Panc1 (cell line): ENCODE measurements at regions of chr4 and their contacts with region 1.

Region 1: DNA sequence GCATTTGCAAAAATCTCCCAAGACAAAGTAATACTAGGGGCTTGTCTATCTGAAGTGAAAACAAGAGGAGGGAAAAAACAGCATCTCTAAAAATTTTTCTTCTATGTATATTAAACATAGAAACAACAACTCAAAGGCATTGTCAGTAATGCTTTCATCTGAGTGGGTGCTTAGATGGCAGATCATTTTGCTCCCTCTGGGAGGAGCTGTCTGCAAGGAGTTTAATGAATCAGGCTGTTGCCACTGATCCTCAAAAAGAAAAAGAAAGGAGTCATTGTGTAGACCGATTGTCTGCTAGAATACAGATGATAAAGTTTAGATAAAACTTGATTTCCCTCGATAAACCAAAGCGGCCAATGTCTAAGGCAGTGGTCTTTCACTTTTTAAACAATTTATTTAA is 49.7 kb upstream of the KLHL8 start:
- DNase-seq: no peak
- ATAC-seq: peak; percentile 78
- H3K4me3 ChIP-seq: no peak overlapping the region
- H3K27ac ChIP-seq: no peak overlapping the region
- H3K4me1 ChIP-seq: no peaks in the 10 kb centered on the region
- H3K27me3 ChIP-seq: no peaks in the 10 kb centered on the region
- CTCF ChIP-seq: peak; percentile 62; the same call in 1 of the 2 replicates

Region 2: DNA sequence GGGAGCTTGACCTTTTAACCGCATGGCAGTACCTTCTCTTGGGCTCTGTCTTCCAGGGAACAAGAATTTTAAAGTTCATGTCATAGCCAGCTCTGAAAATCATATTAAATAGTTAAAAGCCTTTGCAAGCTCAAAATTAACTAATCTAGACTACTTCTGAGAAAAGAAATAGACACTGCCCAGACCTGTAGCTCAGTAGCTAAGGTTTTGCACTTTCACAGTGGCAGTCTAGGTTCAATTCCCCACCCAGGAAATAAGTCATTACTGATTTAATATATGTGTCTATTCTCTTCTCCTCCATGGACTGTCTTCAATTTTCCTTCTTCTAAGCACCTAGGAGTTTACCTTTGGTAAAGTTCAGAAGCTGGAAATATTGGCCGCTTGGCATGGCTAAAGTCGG is 93.4 kb after region 1 on chr4:
- CTCF ChIA-PET with region 1: no interaction called
- POLR2A ChIA-PET with region 1: no interaction called
- in situ Hi-C with region 1: no loop called
- intact Hi-C with region 1: loop called (anchors 5 kb)
- DNase-seq: no peak
- ATAC-seq: no peak
- H3K4me3 ChIP-seq: no peak overlapping the region
- H3K27ac ChIP-seq: no peak overlapping the region
- H3K4me1 ChIP-seq: no peaks in the 10 kb centered on the region
- H3K27me3 ChIP-seq: no peaks in the 10 kb centered on the region
- CTCF ChIP-seq: no peak

Region 3: GRCh38 chr4:87465739-87466366 is 195.7 kb after region 1 on chr4:
- CTCF ChIA-PET with region 1: no interaction called
- POLR2A ChIA-PET with region 1: no interaction called
- in situ Hi-C with region 1: no loop called
- intact Hi-C with region 1: loop called (anchors 2 kb)
- DNase-seq: no peak
- ATAC-seq: peak; percentile 75; the same call in 1 of the 2 replicates
- H3K4me3 ChIP-seq: no peak overlapping the region
- H3K27ac ChIP-seq: no peak overlapping the region
- H3K4me1 ChIP-seq: no peaks in the 10 kb centered on the region
- H3K27me3 ChIP-seq: no peaks in the 10 kb centered on the region
- CTCF ChIP-seq: peak; percentile 56; the same call in 1 of the 2 replicates

Region 4: DNA sequence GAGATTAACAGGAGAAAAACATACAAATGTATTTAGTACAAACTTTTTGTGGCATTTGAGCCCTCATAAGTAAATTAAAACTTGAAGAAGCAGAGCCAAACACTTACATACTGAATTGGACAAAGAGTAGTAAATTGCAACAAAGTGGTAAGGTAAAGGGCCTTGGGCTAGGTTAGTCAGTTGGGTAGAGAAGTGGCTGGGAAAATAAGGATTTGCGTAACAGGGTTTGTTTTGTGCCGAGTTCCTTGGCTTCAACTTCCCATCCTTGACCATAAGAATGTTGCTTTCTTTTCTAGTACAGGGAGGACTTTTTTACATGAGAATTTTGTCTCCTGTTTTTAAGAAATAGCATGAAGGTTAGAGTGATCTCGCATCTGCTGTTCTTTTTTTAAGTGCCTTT is 304.9 kb after region 1 on chr4:
- CTCF ChIA-PET with region 1: no interaction called
- POLR2A ChIA-PET with region 1: no interaction called
- in situ Hi-C with region 1: no loop called
- intact Hi-C with region 1: no loop called
- DNase-seq: no peak
- ATAC-seq: no peak
- H3K4me3 ChIP-seq: no peak overlapping the region
- H3K27ac ChIP-seq: no peak overlapping the region
- H3K4me1 ChIP-seq: no peaks in the 10 kb centered on the region
- H3K27me3 ChIP-seq: no peaks in the 10 kb centered on the region
- CTCF ChIP-seq: no peak

Region 5: DNA sequence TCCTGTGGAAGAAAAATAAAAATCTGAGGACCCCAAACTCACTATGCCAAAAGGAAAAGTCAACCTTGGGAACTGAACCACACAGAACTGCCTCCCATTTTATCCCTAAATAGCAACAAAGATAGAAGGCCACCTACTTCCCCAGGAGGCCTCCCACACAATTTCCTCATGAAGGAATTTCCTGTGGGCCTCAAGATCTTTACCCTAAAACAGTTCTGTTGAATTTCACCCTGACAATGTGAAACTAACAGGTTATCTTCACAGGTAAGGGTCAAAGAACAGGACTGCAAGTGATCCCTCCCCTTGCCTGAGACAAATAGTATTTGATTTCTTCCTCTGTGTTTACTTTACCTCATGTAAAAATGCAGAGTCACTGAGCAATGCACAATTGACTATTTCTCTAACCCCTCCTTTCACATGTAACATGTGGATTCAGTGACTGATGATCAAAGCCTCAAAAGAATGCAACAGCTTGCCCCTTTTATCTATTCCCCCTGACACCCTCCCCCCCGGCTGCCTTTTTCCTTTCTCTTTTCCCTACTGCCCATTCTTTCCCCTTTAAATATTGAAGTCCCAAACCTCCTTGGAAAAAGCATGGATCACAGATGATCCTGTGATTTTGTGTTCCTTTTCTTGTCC is 595.9 kb after region 1 on chr4:
- CTCF ChIA-PET with region 1: no interaction called
- POLR2A ChIA-PET with region 1: no interaction called
- in situ Hi-C with region 1: no loop called
- intact Hi-C with region 1: no loop called
- DNase-seq: no peak
- ATAC-seq: no peak
- H3K4me3 ChIP-seq: no peak overlapping the region
- H3K27ac ChIP-seq: no peak overlapping the region
- H3K4me1 ChIP-seq: no peaks in the 10 kb centered on the region
- H3K27me3 ChIP-seq: no peaks in the 10 kb centered on the region
- CTCF ChIP-seq: no peak